ENCODE measurements at regions of chr19 and their contacts with region 1.

Region 1: GRCh38 chr19:45692187-45693105 is at the start of gene QPCTL:
- DNase-seq: peak; percentile 99
- ATAC-seq: peak; percentile 95
- H3K4me3 Mint-ChIP-seq: peak within 1 kb of the TSS; percentile 91
- H3K27ac Mint-ChIP-seq: peak within 1 kb of the TSS; percentile 95
- H3K4me1 Mint-ChIP-seq: peaks cover 20% of the 10 kb centered on the region
- H3K27me3 Mint-ChIP-seq: no peaks in the 10 kb centered on the region
- total RNA-seq, gene QPCTL: 6.7 to 8.0 TPM

Region 2: DNA sequence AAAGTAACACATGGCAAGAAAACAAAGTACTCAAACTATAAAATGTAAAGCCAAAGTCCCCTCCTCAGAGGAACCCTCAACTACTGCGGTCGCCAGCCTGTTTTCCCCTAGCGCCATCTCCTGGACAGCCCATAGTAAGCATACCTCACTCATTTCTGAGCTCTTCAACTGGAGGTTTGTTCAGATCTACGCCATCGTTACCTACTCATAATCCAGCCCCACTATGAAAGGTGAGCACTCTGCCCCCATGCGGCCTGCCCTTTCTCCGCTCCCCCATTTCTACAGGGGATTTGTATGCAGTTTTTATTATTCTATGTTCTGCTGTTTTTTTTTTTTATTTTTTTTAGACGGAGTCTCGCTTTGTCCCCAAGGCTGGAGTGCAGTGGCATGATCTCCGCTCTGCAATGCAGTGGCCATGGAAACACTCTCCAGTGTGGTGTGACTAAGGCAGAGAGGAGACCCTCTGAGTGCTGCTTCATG is 134.0 kb before region 1 on chr19:
- CTCF ChIA-PET with region 1: interaction called, 15 read pairs
- POLR2A ChIA-PET with region 1: no interaction called
- DNase-seq: peak; percentile 82
- ATAC-seq: peak; percentile 98
- H3K4me3 Mint-ChIP-seq: no peak overlapping the region
- H3K27ac Mint-ChIP-seq: peak overlapping the region; percentile 62
- H3K4me1 Mint-ChIP-seq: peaks cover 28% of the 10 kb centered on the region
- H3K27me3 Mint-ChIP-seq: no peaks in the 10 kb centered on the region

Region 3: GRCh38 chr19:45681391-45682015 is 10.9 kb before region 1 on chr19:
- CTCF ChIA-PET with region 1: interaction called, 116 read pairs
- POLR2A ChIA-PET with region 1: interaction called, 7 read pairs
- DNase-seq: peak; percentile 91
- ATAC-seq: peak; percentile 95
- H3K4me3 Mint-ChIP-seq: peak overlapping the region; percentile 64
- H3K27ac Mint-ChIP-seq: peak overlapping the region; percentile 64
- H3K4me1 Mint-ChIP-seq: peaks cover 26% of the 10 kb centered on the region
- H3K27me3 Mint-ChIP-seq: no peaks in the 10 kb centered on the region

Region 4: GRCh38 chr19:45717166-45717982 is 24.9 kb after region 1 on chr19:
- CTCF ChIA-PET with region 1: interaction called, 101 read pairs
- POLR2A ChIA-PET with region 1: interaction called, 11 read pairs
- DNase-seq: peak; percentile 99
- ATAC-seq: peak; percentile 99
- H3K4me3 Mint-ChIP-seq: peak overlapping the region; percentile 93
- H3K27ac Mint-ChIP-seq: peak overlapping the region; percentile 89
- H3K4me1 Mint-ChIP-seq: peaks cover 38% of the 10 kb centered on the region
- H3K27me3 Mint-ChIP-seq: no peaks in the 10 kb centered on the region

Region 5: GRCh38 chr19:45739498-45740439 is 47.3 kb after region 1 on chr19:
- CTCF ChIA-PET with region 1: no interaction called
- POLR2A ChIA-PET with region 1: no interaction called
- DNase-seq: no peak
- ATAC-seq: no peak
- H3K4me3 Mint-ChIP-seq: no peak overlapping the region
- H3K27ac Mint-ChIP-seq: no peak overlapping the region
- H3K4me1 Mint-ChIP-seq: no peaks in the 10 kb centered on the region
- H3K27me3 Mint-ChIP-seq: peaks cover 4% of the 10 kb centered on the region

Region 6: GRCh38 chr19:45770192-45771101 is 78.0 kb after region 1 on chr19:
- CTCF ChIA-PET with region 1: interaction called, 27 read pairs
- POLR2A ChIA-PET with region 1: interaction called, 8 read pairs
- DNase-seq: peak; percentile 91
- ATAC-seq: peak; percentile 78
- H3K4me3 Mint-ChIP-seq: peak overlapping the region; percentile 81
- H3K27ac Mint-ChIP-seq: peak overlapping the region; percentile 74
- H3K4me1 Mint-ChIP-seq: peaks cover 23% of the 10 kb centered on the region
- H3K27me3 Mint-ChIP-seq: peaks cover 29% of the 10 kb centered on the region